ENCODE measurements at regions of chr21 and their contacts with region 1.

Region 1: GRCh38 chr21:15206514-15206913 is 141.7 kb upstream of the NRIP1 start:
- DNase-seq: no peak
- ATAC-seq: no peak
- H3K4me3 ChIP-seq: no peak overlapping the region
- H3K27ac ChIP-seq: peak overlapping the region in 1 of 10 donors; percentile 54
- H3K4me1 ChIP-seq: peaks cover under 1 to 33% (median 16%) of the 10 kb centered on the region in 9 donors
- H3K27me3 ChIP-seq: no peaks in the 10 kb centered on the region
- CTCF ChIP-seq: no peak

Region 2: DNA sequence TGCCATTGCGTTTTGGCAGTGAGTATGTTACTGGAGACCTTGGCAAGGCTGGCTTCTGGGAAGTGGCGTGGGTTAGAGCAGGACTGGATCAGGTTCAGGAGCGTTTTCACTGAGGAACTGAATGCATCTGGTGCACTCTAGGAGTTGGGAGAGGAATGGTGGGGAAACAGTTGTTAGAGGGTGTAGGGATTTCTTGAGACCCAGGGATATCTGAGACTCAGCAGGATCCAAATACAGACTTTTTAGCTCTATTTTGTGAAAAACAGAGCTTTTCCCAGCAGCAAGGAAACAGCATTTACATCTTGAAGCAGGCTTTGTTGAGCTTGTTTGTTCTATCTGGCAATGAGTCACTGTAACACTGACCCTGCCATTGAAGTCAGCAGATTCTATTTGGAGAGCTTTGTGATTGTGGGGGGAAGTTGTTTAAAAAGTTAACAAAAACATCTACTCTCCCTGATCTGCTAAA is 84.8 kb before region 1 on chr21:
- intact Hi-C with region 1: loop called in 1 of 10 experiments (anchors 5 kb)
- DNase-seq: peak; percentile 19 to 21
- ATAC-seq: peak; percentile 42 to 97 (median 81)
- H3K4me3 ChIP-seq: peak overlapping the region in 1 of 10 donors; percentile 4
- H3K27ac ChIP-seq: peak overlapping the region in 5 of 10 donors; percentile 37 to 81 (median 56)
- H3K4me1 ChIP-seq: peaks cover 0 to 24% (median 16%) of the 10 kb centered on the region in 9 donors
- H3K27me3 ChIP-seq: no peaks in the 10 kb centered on the region
- CTCF ChIP-seq: no peak